Activated T-helper 1 cell treated with anti-CD3 and anti-CD28 coated beads, Interleukin-12 subunit alpha, Interleukin-12 subunit beta, Interleukin-2, Interleukin-4 antibody, amounts not matched to agents 30 ng/mL and 10 ng/mL and 1 ng/mL, durations not matched to agents 14 hours and 24 hours and 36 hours (primary cell): ENCODE measurements at regions of chr14 and their contacts with region 1.

Region 1: DNA sequence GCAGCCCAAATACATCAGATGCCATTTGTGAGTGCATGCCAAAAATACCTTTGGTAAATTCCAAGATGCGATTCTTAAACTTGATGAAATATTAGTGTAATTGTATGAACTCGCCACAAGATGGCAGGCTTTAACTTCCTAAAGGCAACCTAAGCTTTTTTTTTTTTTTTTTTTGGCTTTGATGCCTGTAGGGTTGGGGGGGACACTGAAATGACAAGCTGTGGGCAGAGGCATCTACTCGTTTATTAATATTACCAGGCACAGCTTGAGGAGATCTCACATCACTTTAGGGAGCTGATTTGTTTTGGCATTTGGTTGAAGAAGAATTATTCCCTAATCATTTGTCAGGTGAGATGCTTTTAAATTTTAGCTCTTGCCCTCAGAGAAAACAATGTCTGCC is 126.7 kb upstream of the CCDC196 start:
- DNase-seq: no peak
- H3K4me3 Mint-ChIP-seq: no peak overlapping the region
- H3K27ac Mint-ChIP-seq: no peak overlapping the region
- H3K4me1 Mint-ChIP-seq: no peaks in the 10 kb centered on the region
- H3K27me3 Mint-ChIP-seq: peaks cover 9% of the 10 kb centered on the region

Region 2: GRCh38 chr14:66395300-66395699 is 35.8 kb after region 1 on chr14:
- intact Hi-C with region 1: loop called (anchors 1 kb)
- DNase-seq: peak; percentile 34
- H3K4me3 Mint-ChIP-seq: peak overlapping the region; percentile 41
- H3K27ac Mint-ChIP-seq: peak overlapping the region; percentile 47
- H3K4me1 Mint-ChIP-seq: peaks cover 13% of the 10 kb centered on the region
- H3K27me3 Mint-ChIP-seq: peaks cover 11% of the 10 kb centered on the region

Region 3: DNA sequence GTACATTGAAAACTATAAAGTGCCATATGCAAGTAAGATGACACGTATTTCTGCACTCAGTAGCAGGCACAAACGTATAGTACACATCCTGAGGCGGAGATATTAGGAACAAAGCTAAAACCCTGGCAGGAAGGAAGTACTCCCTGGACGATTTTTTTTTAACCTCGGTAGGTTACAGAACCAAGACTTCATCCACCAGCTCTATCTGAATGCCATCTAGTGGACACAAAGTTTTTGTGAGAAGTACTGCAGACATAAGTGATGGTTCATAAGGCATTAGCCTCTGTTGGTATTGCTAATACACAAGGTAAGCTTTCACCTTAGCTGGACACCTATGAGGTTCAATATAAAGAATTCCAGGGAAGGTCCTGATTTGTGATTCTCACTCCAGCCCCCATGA is 43.7 kb after region 1 on chr14:
- intact Hi-C with region 1: loop called (anchors 1 kb)
- DNase-seq: no peak
- H3K4me3 Mint-ChIP-seq: no peak overlapping the region
- H3K27ac Mint-ChIP-seq: no peak overlapping the region
- H3K4me1 Mint-ChIP-seq: no peaks in the 10 kb centered on the region
- H3K27me3 Mint-ChIP-seq: no peaks in the 10 kb centered on the region

Region 4: DNA sequence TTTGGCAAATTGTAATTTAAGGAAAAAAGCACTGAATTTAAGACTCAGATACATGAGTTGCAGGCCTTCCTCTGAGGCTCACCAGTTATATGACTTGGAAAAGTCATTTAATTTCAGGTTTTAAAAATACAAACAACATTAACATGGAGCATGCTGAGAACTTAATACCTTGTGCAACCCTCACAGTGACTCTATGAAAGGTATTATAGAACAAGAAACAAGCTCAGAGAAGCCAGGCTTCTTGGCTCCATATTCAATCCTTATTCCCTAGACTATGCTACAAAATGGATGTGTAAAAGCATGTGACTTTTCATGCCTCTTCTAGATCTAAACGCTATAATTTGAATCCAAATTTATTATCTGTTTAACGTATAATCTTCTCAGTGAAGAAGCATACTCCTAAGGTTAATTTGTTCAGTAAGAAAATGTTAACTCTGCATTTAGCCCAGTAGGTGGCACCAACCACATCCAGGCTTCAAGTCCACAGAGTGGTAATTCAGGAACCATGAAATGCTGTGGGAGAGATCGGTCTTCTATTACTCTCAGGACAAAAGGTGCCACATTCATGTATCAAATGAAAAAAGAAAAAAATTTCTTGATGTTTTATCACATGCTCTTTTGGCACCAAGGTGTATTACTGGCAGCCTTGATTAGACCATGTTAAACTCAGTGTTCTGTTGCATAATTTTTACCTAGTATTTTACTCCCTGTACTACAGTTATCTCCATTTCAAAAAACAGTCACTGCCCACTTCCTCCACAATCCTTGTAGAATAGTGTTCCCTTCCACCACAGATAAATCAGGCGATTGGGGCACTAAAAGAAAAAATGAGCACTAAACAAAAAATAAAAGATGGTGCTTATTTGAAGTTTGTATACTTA is 136.0 kb after region 1 on chr14:
- intact Hi-C with region 1: loop called (anchors 2 kb)
- DNase-seq: peak; percentile 12
- H3K4me3 Mint-ChIP-seq: no peak overlapping the region
- H3K27ac Mint-ChIP-seq: no peak overlapping the region
- H3K4me1 Mint-ChIP-seq: peaks cover 19% of the 10 kb centered on the region
- H3K27me3 Mint-ChIP-seq: peaks cover 22% of the 10 kb centered on the region

Region 5: GRCh38 chr14:66610154-66610563 is 250.7 kb after region 1 on chr14:
- intact Hi-C with region 1: no loop called
- DNase-seq: no peak
- H3K4me3 Mint-ChIP-seq: no peak overlapping the region
- H3K27ac Mint-ChIP-seq: peak overlapping the region; percentile 29
- H3K4me1 Mint-ChIP-seq: peaks cover 21% of the 10 kb centered on the region
- H3K27me3 Mint-ChIP-seq: peaks cover 5% of the 10 kb centered on the region

Region 6: GRCh38 chr14:67285876-67286452 is 926.5 kb after region 1 on chr14:
- intact Hi-C with region 1: loop called (anchors 10 kb)
- DNase-seq: no peak
- H3K4me3 Mint-ChIP-seq: no peak overlapping the region
- H3K27ac Mint-ChIP-seq: no peak overlapping the region
- H3K4me1 Mint-ChIP-seq: no peaks in the 10 kb centered on the region
- H3K27me3 Mint-ChIP-seq: no peaks in the 10 kb centered on the region